ENCODE measurements at regions of chr9 and their contacts with region 1.

Region 1: GRCh38 chr9:126947529-126947928 is 32.9 kb downstream of the RALGPS1 start:
- DNase-seq: peak; percentile 54
- ATAC-seq: peak; percentile 100
- H3K4me3 Mint-ChIP-seq: no peak overlapping the region
- H3K27ac Mint-ChIP-seq: peak overlapping the region; percentile 64; the same call in 1 of the 2 replicates
- H3K4me1 Mint-ChIP-seq: peaks cover 10% of the 10 kb centered on the region
- H3K27me3 Mint-ChIP-seq: no peaks in the 10 kb centered on the region; the same call in 1 of the 2 replicates
- CTCF ChIP-seq: no peak; the same call in 1 of the 2 replicates

Region 2: GRCh38 chr9:126932871-126933321 is 14.6 kb before region 1 on chr9:
- CTCF ChIA-PET with region 1: interaction called, 13 read pairs
- POLR2A ChIA-PET with region 1: no interaction called
- DNase-seq: peak; percentile 48
- ATAC-seq: peak; percentile 76
- H3K4me3 Mint-ChIP-seq: no peak overlapping the region
- H3K27ac Mint-ChIP-seq: no peak overlapping the region
- H3K4me1 Mint-ChIP-seq: peaks cover 12% of the 10 kb centered on the region
- H3K27me3 Mint-ChIP-seq: no peaks in the 10 kb centered on the region; the same call in 1 of the 2 replicates
- CTCF ChIP-seq: no peak

Region 3: DNA sequence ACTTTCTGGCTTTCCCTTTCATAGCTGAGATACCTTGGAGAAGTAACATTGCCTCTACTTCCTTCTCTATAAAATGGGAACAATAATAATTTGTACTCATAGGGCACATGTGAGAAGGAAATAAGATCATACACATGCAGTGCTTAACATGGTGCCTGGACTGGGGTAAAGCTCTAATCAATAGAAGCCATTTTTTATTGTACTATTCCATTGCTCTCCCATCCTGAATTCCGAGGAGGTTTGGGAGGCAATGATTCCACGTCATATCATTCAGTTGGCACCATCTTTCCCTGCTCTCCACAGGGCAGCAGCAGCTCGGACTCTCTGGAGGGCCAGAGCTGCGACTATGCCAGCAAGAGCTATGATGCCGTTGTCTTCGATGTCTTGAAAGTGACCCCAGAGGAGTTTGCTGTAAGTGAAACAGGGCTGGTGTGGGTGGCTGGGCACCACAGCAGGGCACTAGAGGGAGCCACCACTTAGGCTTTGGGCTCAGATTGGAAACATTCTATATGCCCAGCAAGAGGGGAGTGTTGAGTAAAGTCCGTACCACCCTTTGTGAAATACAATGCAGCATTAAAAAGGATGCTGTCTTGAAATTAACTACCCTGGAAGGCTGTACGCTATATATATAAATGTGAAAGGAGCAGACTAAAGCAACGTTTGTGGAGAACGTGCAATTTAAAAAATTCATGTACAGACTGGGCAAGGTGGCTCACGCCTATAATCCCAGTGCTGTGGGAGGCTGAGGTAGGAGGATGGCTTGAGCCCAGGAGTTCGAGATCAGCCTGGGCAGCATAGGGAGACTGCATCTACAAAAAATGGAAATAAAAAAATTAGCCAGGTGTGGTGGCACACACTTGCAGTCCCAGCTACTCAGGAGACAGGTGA is 18.3 kb after region 1 on chr9:
- CTCF ChIA-PET with region 1: interaction called, 22 read pairs
- POLR2A ChIA-PET with region 1: no interaction called
- DNase-seq: peak; percentile 57
- ATAC-seq: peak; percentile 94
- H3K4me3 Mint-ChIP-seq: no peak overlapping the region
- H3K27ac Mint-ChIP-seq: peak overlapping the region; percentile 78
- H3K4me1 Mint-ChIP-seq: peaks cover 16% of the 10 kb centered on the region
- H3K27me3 Mint-ChIP-seq: no peaks in the 10 kb centered on the region
- CTCF ChIP-seq: peak; percentile 34; the same call in 1 of the 2 replicates

Region 4: DNA sequence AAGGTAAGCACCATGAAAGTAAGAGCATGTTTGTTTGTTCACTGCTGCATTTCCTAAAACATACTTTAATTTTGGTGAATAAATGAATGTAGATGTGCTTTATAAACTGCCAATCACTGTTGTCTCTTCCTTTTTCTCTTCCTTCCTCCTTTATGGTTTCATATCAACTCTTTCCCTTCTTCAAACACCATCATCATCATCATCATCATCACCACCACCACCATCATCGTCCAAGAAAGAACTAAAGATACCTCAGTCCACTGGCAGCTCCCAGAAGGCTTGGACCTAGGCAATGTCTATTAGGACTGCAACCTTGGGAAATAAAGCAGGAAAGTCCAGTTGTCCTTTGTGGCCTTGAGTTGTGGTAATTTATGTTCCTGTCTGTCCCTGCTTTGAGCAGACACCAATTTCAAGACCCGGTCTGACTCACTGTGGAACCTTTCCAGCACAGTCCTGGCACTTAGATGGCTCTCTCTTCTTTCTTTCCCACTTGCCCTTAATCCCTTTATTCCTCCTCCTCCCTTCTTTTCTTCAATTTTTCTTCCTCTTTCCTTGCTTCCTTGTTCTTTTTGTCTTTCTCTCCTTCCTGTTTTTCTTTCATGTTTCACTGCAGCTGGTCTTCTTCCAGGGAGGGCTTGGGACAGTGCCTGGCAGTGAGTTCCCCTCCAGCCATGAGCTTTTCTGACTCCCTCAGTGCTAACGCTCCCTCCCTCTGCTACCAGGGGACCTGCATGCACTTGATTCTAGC is 75.6 kb after region 1 on chr9:
- CTCF ChIA-PET with region 1: no interaction called
- POLR2A ChIA-PET with region 1: no interaction called
- DNase-seq: no peak
- ATAC-seq: no peak
- H3K4me3 Mint-ChIP-seq: no peak overlapping the region
- H3K27ac Mint-ChIP-seq: no peak overlapping the region
- H3K4me1 Mint-ChIP-seq: peaks cover 11% of the 10 kb centered on the region
- H3K27me3 Mint-ChIP-seq: no peaks in the 10 kb centered on the region
- CTCF ChIP-seq: no peak

Region 5: DNA sequence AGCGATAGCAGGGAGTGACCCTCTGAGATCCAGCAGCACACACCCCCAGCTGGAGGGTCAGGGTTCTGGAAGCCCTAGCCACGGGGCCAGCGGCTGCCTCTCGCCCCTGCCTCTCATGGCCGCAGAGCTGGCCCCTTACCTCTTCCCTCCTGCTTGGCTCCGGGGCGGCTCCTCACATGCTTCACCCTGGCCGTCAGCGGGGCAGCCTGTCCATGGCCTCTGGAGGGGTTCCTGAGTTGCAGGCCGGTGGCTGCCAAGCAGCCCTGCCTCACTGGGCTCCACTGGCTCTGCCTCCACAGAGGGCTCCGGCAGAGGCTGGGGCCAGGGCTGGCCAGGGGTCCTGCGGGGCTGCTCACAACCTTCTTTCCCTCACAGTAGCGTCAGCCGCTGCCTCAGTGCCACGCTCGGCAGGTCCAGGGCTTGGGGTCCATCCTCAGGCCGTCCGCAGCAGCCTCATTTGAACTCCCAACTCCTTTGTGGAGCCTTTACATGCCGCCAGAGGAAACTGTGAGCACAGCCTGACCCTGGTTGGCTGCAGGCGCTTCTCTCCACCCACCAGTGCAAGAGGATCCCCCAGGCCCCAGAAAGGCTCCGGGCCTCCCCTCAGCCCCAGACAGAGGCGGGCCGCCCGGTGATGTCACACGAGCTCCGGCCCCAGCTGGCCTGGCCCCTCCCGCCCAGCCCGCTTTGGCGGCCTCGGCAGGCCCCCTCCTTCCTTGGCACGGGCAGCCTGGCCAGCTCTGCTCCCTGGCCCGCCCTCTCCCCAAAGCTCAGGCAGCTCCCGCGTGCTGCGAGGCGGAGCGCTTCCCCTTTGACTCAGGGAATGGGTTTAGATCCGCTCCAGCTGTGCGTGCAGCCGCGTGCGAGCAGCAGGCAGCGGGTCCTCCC is 174.9 kb after region 1 on chr9 and contains the start of gene ANGPTL2:
- CTCF ChIA-PET with region 1: interaction called, 11 read pairs
- POLR2A ChIA-PET with region 1: no interaction called
- DNase-seq: peak; percentile 91
- ATAC-seq: peak; percentile 92
- H3K4me3 Mint-ChIP-seq: peak within 1 kb of the TSS; percentile 77
- H3K27ac Mint-ChIP-seq: peak within 1 kb of the TSS; percentile 54; the same call in 1 of the 2 replicates
- H3K4me1 Mint-ChIP-seq: peaks cover 29% of the 10 kb centered on the region
- H3K27me3 Mint-ChIP-seq: no peaks in the 10 kb centered on the region; the same call in none of the 2 replicates
- CTCF ChIP-seq: no peak
- total RNA-seq, gene ANGPTL2: 4.5 to 6.7 TPM (median 6.3 TPM) in 3 replicates

Measured in WTC11 (cell line).